ENCODE measurements at regions of chr6 and their contacts with region 1.

Region 1: GRCh38 chr6:90393232-90393884 is 96.7 kb upstream of the BACH2 start:
- DNase-seq: peak; percentile 47 to 80
- H3K4me3 ChIP-seq: no peak overlapping the region
- H3K27ac ChIP-seq: no peak overlapping the region
- H3K4me1 ChIP-seq: peaks cover 0 to 5% (median 1%) of the 10 kb centered on the region in 4 experiments; a peak in 2 of 7 replicates
- H3K27me3 ChIP-seq: no peaks in the 10 kb centered on the region
- CTCF ChIP-seq: peak; percentile 66 to 88 (median 81)
- EP300 ChIP-seq: no peak
- POLR2A ChIP-seq: no peak
- RAD21 ChIP-seq: peak; percentile 87 to 89

Region 2: DNA sequence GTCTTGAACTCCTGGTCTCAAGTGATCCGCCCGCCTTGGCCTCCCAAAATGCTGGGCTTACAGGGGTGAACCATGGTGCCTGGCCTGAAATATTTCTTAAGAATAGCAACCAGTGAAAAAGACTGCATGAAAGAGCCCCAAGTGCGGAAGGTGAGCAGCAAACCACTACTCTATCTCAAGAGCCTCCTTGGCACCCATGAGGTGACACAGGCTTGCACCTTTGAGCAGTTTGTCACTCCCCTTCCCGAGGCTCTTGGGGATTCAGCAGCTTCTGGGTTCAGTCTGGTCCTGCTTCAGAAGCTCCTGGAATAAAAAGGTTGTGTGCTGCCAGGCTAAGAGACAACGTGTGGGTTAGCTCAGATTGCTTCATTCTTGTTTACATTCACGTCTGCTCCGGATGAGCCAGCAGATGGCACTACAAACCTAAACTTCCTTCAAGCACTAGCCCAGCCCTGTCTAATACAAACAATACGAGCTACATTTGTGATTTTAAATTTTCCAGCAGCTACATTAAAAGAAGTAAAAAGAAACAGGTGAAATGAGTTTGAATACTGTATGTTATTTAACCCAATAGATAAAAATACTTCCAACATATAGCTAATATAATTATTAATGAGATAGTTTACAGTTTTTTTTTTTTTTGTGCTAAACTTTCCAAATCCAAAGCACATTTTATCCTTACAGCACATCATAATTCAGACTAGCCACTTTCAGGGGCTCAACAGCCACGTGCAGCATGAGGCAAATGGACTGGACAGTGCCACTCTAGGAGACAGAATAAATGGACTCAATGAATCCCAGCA is 452.9 kb before region 1 on chr6:
- CTCF ChIA-PET with region 1: interaction called, 16 read pairs
- POLR2A ChIA-PET with region 1: no interaction called
- DNase-seq: peak in 1 of 2 experiments; percentile 34
- H3K4me3 ChIP-seq: no peak overlapping the region
- H3K27ac ChIP-seq: no peak overlapping the region
- H3K4me1 ChIP-seq: no peaks in the 10 kb centered on the region; a peak in 2 of 7 replicates
- H3K27me3 ChIP-seq: no peaks in the 10 kb centered on the region
- CTCF ChIP-seq: peak; percentile 26 to 87 (median 81)
- EP300 ChIP-seq: no peak
- POLR2A ChIP-seq: no peak
- RAD21 ChIP-seq: peak; percentile 93 to 95

Region 3: DNA sequence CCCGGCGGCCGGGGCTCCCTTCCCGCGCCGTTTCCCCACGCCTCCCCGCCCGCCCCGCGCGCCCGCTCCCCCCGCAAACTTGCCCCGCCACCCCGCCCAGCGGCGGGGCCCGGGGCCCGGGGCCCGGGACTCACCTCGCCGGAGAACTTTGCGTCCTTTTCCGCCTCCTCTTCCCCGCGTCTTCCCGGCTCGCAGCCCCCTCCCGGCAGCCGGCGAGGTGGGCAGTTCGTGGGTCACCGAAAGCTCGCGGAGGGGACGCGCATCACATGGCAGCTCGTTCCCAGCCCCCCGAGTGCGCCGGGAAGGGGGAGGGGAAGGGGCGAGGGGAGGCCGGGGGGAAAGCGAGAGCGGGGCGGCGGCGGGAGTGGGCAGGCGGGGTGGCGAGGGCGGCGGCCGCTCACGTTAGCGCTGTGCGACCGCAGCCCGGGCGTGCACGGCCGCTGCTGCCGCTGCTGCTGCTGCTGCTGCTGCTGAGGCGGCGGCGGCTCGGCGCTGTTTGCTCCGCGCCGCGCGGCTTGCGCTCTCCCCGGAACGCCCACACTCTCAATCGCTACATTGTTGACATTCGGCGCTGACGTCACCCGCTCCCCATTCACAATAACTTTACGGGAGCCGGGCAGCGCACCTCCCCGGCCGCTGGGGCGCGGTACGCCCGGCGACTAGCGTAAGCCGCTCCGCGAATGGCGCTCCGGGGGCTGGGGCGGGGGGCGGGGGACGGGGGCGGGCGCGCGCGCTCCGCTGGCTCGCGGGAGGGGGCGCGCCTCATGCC is 96.8 kb before region 1 on chr6 and contains the start of gene BACH2:
- CTCF ChIA-PET with region 1: interaction called, 17 read pairs
- POLR2A ChIA-PET with region 1: interaction called, 8 read pairs
- DNase-seq: peak; percentile 70 to 93
- H3K4me3 ChIP-seq: peak within 1 kb of the TSS; percentile 44 to 76 (median 73)
- H3K27ac ChIP-seq: peak within 1 kb of the TSS; percentile 70; the same call in 1 of the 2 replicates
- H3K4me1 ChIP-seq: peaks cover 8 to 17% (median 12%) of the 10 kb centered on the region in 4 experiments
- H3K27me3 ChIP-seq: peaks cover 4 to 26% (median 22%) of the 10 kb centered on the region in 4 experiments; a peak in 6 of 7 replicates
- CTCF ChIP-seq: no peak
- EP300 ChIP-seq: no peak
- POLR2A ChIP-seq: peak; percentile 20 to 54; a peak in 2 of 3 replicates
- RAD21 ChIP-seq: no peak; a peak in 1 of 4 replicates
- total RNA-seq, gene BACH2: 5.9 and 8.0 TPM in 2 replicates

Region 4: DNA sequence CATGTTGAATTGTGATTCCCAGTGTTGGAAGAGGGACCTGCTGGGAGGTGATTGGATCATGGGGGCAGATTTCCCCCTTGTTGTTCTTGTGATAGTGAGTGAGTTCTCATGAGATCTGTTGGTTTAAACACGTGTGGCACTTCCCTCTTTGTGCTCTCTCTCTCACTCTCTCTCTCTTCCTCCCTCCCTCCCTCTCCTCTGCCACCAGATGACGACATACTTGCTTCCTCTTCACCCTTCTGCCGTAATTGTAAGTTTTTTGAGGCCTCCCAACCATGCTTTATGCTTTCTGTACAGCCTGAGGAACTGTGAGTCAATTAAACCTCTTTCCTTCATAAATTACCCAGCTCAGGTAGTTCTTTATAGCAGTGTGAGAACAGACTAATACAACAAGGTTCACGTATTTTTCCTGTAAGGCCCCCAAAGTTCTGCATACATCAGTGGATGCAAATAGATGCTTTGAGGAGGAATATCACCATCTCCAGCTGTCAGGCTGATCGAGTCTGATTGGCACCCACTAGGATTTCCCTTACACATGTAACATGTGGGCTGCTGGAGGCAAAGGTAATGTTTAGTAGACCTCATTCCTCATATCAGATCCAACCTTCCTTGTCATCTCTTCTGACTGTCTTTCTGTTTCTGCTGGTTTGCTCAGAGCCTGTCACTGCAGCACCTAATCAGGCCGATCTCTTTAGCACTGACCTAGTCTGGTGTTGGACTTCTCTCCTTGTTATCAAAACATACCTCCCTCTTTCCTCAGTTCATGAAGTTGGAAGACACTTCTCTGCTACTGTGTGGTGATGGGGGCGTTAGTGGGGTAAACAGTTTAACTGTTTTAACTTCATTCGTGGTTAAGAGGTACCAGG is 42.4 kb before region 1 on chr6:
- CTCF ChIA-PET with region 1: interaction called, 15 read pairs
- POLR2A ChIA-PET with region 1: no interaction called
- DNase-seq: no peak
- H3K4me3 ChIP-seq: no peak overlapping the region
- H3K27ac ChIP-seq: no peak overlapping the region
- H3K4me1 ChIP-seq: peaks cover 0 to under 1% (median 0%) of the 10 kb centered on the region in 4 experiments; a peak in 2 of 7 replicates
- H3K27me3 ChIP-seq: peaks cover 0 to 2% (median 0%) of the 10 kb centered on the region in 4 experiments; a peak in 1 of 7 replicates
- CTCF ChIP-seq: no peak
- EP300 ChIP-seq: no peak
- POLR2A ChIP-seq: no peak
- RAD21 ChIP-seq: no peak

Region 5: DNA sequence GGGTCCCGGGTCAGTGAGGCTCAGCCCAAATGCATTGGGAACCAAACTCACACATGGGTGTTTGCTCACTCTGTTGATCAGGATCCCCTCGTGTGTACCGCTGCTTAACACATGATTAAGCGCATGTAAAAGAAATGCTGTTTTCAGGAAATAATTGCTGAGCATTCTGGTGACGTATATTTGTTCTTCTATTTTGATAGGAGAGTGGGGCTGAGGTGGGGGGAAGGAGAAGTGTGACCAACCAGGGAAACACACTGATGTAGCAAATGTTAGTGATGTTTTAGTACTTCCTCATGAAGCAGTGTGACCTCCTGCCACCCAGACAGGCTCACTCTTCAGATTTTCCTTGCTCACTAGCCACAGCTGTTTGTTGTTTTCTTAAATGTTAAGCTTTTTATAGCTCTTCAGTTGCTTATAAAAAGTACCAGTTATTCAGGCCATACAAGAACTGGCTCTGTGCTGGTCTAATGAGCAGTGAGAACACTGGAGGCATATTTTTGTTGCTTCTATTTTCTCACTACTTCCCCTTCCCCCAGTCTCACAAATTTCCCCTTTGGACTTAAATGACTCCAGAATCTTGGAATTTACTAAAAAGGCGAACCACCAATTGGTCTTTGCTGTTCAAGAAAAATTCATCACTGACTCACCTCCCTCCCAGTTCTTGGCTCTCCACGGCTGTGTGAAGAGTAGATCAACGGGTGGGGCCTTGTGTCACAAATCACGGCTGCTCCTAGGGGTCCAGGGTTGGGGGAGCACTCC is 17.5 kb before region 1 on chr6:
- CTCF ChIA-PET with region 1: interaction called, 17 read pairs
- POLR2A ChIA-PET with region 1: no interaction called
- DNase-seq: no peak
- H3K4me3 ChIP-seq: no peak overlapping the region
- H3K27ac ChIP-seq: no peak overlapping the region
- H3K4me1 ChIP-seq: no peaks in the 10 kb centered on the region
- H3K27me3 ChIP-seq: no peaks in the 10 kb centered on the region
- CTCF ChIP-seq: no peak
- EP300 ChIP-seq: no peak
- POLR2A ChIP-seq: no peak
- RAD21 ChIP-seq: no peak

Region 6: DNA sequence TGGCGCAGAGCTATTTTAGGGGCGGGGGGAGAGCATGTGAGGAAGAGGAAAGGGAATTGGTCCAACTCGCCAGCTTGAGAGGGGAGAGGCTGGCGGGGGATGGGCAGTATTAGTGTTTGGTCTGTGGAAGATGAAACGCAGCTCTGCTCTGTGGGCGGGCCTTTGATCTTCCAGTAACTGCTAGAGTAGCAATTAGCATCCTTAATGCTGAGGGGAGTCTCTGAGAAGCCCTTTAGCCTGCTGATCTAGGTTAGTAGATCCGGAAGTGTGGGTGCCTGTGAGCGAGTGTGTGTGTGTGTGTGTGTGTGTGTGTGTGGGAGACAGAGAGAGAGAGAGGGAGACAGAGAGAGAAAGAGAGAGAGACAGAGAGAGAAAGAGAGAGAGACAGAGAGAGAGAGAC is 20.5 kb after region 1 on chr6:
- CTCF ChIA-PET with region 1: interaction called, 24 read pairs
- POLR2A ChIA-PET with region 1: no interaction called
- DNase-seq: peak in 1 of 2 experiments; percentile 58
- H3K4me3 ChIP-seq: peak overlapping the region in 1 of 4 experiments; percentile 5; a peak in 1 of 8 replicates
- H3K27ac ChIP-seq: no peak overlapping the region
- H3K4me1 ChIP-seq: peaks cover 0 to 12% (median 7%) of the 10 kb centered on the region in 4 experiments; a peak in 5 of 7 replicates
- H3K27me3 ChIP-seq: no peaks in the 10 kb centered on the region
- CTCF ChIP-seq: no peak
- EP300 ChIP-seq: no peak
- POLR2A ChIP-seq: no peak
- RAD21 ChIP-seq: no peak

Region 7: GRCh38 chr6:90434094-90434493 is 40.7 kb after region 1 on chr6:
- CTCF ChIA-PET with region 1: interaction called, 17 read pairs
- POLR2A ChIA-PET with region 1: no interaction called
- DNase-seq: no peak
- H3K4me3 ChIP-seq: no peak overlapping the region
- H3K27ac ChIP-seq: no peak overlapping the region
- H3K4me1 ChIP-seq: peaks cover 0 to 20% (median 15%) of the 10 kb centered on the region in 4 experiments; a peak in 4 of 7 replicates
- H3K27me3 ChIP-seq: no peaks in the 10 kb centered on the region; a peak in 1 of 7 replicates
- CTCF ChIP-seq: peak; percentile 57 to 81 (median 78)
- EP300 ChIP-seq: no peak
- POLR2A ChIP-seq: no peak
- RAD21 ChIP-seq: peak; percentile 90 to 91

Region 8: DNA sequence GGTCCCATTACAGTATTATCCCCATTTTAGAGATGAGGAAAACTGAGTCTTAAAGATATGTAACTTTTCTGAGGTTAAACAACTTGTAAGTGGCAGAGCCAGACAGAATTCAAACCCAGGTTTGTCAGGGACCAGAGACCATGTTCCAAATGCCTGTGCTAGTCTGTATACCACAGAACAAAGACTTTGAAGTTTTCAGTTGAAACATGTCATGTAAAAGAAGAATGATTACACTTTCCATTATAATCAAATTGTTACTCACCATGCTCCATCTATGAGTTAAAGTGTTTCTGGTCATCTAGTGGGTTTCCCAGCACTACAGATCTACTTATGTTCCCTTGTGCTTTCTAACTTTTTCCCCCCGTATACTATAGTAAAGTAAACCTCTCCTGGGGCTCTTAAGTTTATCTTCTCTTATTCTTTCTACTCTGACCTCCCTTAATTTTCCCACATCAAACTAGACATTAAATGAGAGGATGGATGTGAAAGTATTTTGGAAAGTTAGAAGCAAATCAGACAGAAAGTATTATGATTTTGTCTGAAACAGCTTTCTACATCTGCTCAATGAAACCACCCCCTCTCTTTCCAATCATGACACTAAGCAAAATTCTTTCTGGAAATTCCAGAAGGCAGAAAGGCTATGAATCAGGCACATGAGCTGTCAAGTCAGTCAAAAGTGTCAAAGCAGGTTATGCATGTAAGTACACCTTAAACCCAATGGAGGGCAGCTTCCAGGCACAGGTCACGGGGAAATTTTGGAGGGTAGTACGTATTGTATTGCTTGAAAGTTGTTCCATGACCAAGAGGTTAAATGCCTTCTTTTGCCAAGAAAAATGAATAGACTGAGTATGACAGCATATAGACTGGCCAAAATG is 326.2 kb after region 1 on chr6:
- CTCF ChIA-PET with region 1: no interaction called
- POLR2A ChIA-PET with region 1: no interaction called
- DNase-seq: no peak
- H3K4me3 ChIP-seq: no peak overlapping the region
- H3K27ac ChIP-seq: no peak overlapping the region
- H3K4me1 ChIP-seq: no peaks in the 10 kb centered on the region
- H3K27me3 ChIP-seq: no peaks in the 10 kb centered on the region
- CTCF ChIP-seq: no peak
- EP300 ChIP-seq: no peak
- POLR2A ChIP-seq: no peak
- RAD21 ChIP-seq: no peak